Spleen (tissue), 13 donors: ENCODE measurements at regions of chrX and their contacts with region 1.

Region 1: DNA sequence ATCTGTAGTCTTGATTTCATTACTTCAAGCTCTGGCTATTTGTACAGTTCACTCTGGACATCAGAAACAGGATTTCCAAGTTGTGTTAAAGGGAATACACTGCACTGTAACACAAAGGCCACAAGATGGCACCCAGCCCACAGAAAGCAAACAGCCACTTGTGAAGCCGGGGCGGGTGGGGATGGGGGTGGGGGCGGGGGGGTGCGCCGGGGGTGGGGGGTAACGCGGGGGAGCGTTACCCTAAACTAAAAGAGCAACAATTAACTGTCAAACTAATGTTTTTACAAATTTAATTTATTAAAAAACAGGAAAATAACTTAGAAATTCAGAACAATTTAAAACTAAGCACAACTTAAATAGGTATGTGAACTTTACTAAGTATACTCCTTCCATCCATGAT is 27.3 kb downstream of the PRDX4 start:
- DNase-seq: no peak
- H3K4me3 ChIP-seq: no peak overlapping the region
- H3K27ac ChIP-seq: no peak overlapping the region
- H3K4me1 ChIP-seq: no peaks in the 10 kb centered on the region
- H3K27me3 ChIP-seq: peaks cover 0 to 3% (median 0%) of the 10 kb centered on the region in 7 donors
- CTCF ChIP-seq: peak in 7 of 11 experiments; percentile 33 to 62 (median 56)
- POLR2A ChIP-seq: no peak

Region 2: GRCh38 chrX:23854945-23855344 is 160.3 kb after region 1 on chrX:
- intact Hi-C with region 1: no loop called
- DNase-seq: no peak
- H3K4me3 ChIP-seq: no peak overlapping the region
- H3K27ac ChIP-seq: peak overlapping the region in 1 of 8 donors; percentile 4
- H3K4me1 ChIP-seq: no peaks in the 10 kb centered on the region
- H3K27me3 ChIP-seq: no peaks in the 10 kb centered on the region
- CTCF ChIP-seq: no peak
- POLR2A ChIP-seq: no peak

Region 3: GRCh38 chrX:23883737-23884354 is 189.2 kb after region 1 on chrX:
- intact Hi-C with region 1: no loop called
- DNase-seq: no peak
- H3K4me3 ChIP-seq: no peak overlapping the region
- H3K27ac ChIP-seq: peak overlapping the region in 3 of 8 donors; percentile 23 to 61 (median 60)
- H3K4me1 ChIP-seq: peaks cover 0 to 5% (median 0%) of the 10 kb centered on the region in 6 donors
- H3K27me3 ChIP-seq: no peaks in the 10 kb centered on the region
- CTCF ChIP-seq: no peak
- POLR2A ChIP-seq: no peak

Region 4: DNA sequence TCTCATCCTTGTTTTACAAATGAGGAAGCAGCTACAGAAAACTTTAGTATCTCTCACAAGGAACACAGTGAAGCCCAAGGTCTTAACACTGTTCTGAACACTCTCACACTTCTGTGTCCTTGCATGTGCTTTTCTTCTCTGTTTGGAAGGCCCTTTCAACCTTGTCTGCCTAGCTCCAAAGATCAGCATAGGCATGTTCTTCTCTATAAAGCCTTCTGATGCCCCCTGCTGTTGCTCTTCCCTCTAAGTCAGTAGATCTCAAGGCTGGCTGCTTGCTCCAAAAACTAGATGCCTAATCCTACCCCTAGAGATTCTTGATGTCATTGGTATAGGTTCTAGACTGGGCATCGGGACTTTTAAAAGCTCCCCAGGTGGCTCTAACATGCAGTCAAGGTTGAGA is 207.2 kb after region 1 on chrX:
- intact Hi-C with region 1: loop called (anchors 2 kb)
- DNase-seq: no peak
- H3K4me3 ChIP-seq: peak overlapping the region in 1 of 8 donors; percentile 40
- H3K27ac ChIP-seq: peak overlapping the region; percentile 29 to 87 (median 71)
- H3K4me1 ChIP-seq: peaks cover 4 to 35% (median 21%) of the 10 kb centered on the region in 6 donors
- H3K27me3 ChIP-seq: no peaks in the 10 kb centered on the region
- CTCF ChIP-seq: peak in 10 of 11 experiments; percentile 14 to 64 (median 44)
- POLR2A ChIP-seq: no peak